ENCODE measurements at regions of chr3 and their contacts with region 1.

Region 1: GRCh38 chr3:146326670-146327543 is 76.0 kb upstream of the PLSCR4 start:
- DNase-seq: peak; percentile 57
- H3K4me3 ChIP-seq: no peak overlapping the region
- H3K27ac ChIP-seq: no peak overlapping the region
- H3K27me3 ChIP-seq: no peaks in the 10 kb centered on the region
- CTCF ChIP-seq: peak; percentile 63

Region 2: GRCh38 chr3:146195030-146195429 is 131.9 kb before region 1 on chr3:
- CTCF ChIA-PET with region 1: interaction called, 215 read pairs
- POLR2A ChIA-PET with region 1: interaction called, 9 read pairs
- DNase-seq: no peak
- H3K4me3 ChIP-seq: no peak overlapping the region
- H3K27ac ChIP-seq: no peak overlapping the region
- H3K27me3 ChIP-seq: no peaks in the 10 kb centered on the region
- CTCF ChIP-seq: no peak

Region 3: GRCh38 chr3:146218880-146219866 is 107.7 kb before region 1 on chr3:
- CTCF ChIA-PET with region 1: interaction called, 71 read pairs
- POLR2A ChIA-PET with region 1: interaction called, 4 read pairs
- DNase-seq: peak; percentile 20
- H3K4me3 ChIP-seq: no peak overlapping the region
- H3K27ac ChIP-seq: no peak overlapping the region
- H3K27me3 ChIP-seq: no peaks in the 10 kb centered on the region
- CTCF ChIP-seq: peak; percentile 67

Region 4: GRCh38 chr3:146313411-146314111 is 13.3 kb before region 1 on chr3:
- CTCF ChIA-PET with region 1: interaction called, 22 read pairs
- POLR2A ChIA-PET with region 1: no interaction called
- DNase-seq: peak; percentile 52
- H3K4me3 ChIP-seq: no peak overlapping the region
- H3K27ac ChIP-seq: no peak overlapping the region
- H3K27me3 ChIP-seq: no peaks in the 10 kb centered on the region
- CTCF ChIP-seq: no peak

Region 5: DNA sequence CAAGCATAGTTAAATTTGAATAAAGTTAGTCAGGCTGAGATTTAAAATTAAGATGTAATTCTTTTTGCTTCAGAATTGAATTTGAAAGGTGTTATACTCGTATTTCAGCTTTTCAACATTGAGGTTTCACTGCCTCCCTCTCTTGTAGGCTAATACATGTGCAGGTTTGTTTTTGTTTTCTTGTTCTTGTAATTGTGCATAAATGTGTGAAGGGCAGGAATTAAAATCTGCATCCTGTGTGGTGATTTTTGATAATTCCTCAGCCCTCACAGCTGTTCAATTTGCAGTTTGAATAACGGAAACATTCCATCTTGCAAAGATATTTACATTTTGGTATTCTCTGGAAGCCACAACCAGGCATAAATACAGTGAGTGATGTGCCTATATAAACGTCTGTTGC is 242.4 kb after region 1 on chr3:
- CTCF ChIA-PET with region 1: interaction called, 12 read pairs
- POLR2A ChIA-PET with region 1: no interaction called
- DNase-seq: no peak
- H3K4me3 ChIP-seq: no peak overlapping the region
- H3K27ac ChIP-seq: no peak overlapping the region
- H3K27me3 ChIP-seq: no peaks in the 10 kb centered on the region
- CTCF ChIP-seq: no peak